MCF 10A (cell line): ENCODE measurements at regions of chr1 and their contacts with region 1.

Region 1: DNA sequence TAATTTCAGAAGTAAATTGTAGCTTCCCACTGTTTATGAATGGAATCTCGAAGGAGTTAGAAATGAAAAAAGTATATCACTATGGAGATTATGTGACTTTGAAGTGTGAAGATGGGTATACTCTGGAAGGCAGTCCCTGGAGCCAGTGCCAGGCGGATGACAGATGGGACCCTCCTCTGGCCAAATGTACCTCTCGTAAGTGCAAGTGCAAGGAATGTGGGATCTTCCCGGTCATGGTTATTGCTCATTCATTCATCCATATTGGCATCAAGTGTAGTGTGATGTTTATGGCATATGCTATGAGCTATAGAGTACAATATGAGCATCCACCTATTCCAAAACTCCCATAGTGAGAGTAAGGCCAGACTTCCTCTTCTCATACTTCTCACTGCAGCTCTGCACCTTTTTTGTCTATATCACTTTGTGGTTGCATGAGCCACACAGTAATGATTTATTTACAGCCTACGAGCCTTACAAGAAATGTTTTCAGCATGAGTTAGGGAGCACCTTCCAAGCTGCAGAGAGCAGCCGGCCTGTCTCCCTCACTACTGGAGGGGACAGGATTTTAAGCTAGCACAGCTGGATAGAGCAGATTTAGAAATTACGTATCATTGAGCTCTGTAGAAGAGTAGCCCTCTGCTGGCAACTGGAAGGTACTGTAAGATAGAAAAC is 24.9 kb upstream of the CR1L start:
- DNase-seq: peak; percentile 73
- H3K4me3 Mint-ChIP-seq: no peak overlapping the region
- H3K27ac Mint-ChIP-seq: no peak overlapping the region
- H3K4me1 Mint-ChIP-seq: no peaks in the 10 kb centered on the region
- H3K27me3 Mint-ChIP-seq: peaks cover 27% of the 10 kb centered on the region
- CTCF ChIP-seq: peak; percentile 75

Region 2: DNA sequence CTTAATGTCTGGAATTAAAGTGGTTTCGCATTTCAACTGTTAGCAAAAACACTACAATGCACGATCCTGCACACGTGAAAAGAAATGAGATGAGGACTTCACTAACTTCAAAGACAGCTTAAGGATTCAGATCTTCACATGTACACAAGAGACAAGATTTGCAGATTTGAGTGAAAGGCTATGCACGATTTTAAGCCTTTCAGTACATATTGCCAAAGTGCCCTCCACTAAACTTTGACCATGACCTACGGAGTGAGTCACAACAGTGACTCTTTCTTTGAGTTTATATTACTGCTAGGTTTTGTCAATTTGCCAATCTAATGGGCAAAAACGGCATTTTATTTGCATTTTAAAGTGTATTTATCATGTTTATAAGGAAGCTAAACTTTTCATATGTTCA is 16.2 kb before region 1 on chr1:
- CTCF ChIA-PET with region 1: interaction called, 59 read pairs
- POLR2A ChIA-PET with region 1: interaction called, 7 read pairs
- intact Hi-C with region 1: no loop called
- DNase-seq: peak; percentile 82
- H3K4me3 Mint-ChIP-seq: no peak overlapping the region
- H3K27ac Mint-ChIP-seq: no peak overlapping the region
- H3K4me1 Mint-ChIP-seq: peaks cover 5% of the 10 kb centered on the region
- H3K27me3 Mint-ChIP-seq: peaks cover 63% of the 10 kb centered on the region
- CTCF ChIP-seq: no peak

Region 3: GRCh38 chr1:207654320-207654719 is 34.3 kb after region 1 on chr1:
- CTCF ChIA-PET with region 1: interaction called, 11 read pairs
- POLR2A ChIA-PET with region 1: interaction called, 5 read pairs
- intact Hi-C with region 1: no loop called
- DNase-seq: no peak
- H3K4me3 Mint-ChIP-seq: no peak overlapping the region
- H3K27ac Mint-ChIP-seq: no peak overlapping the region
- H3K4me1 Mint-ChIP-seq: no peaks in the 10 kb centered on the region
- H3K27me3 Mint-ChIP-seq: peaks cover 15% of the 10 kb centered on the region
- CTCF ChIP-seq: peak; percentile 28

Region 4: GRCh38 chr1:207672522-207673130 is 52.6 kb after region 1 on chr1:
- CTCF ChIA-PET with region 1: interaction called, 16 read pairs
- POLR2A ChIA-PET with region 1: no interaction called
- intact Hi-C with region 1: loop called (anchors 2 kb)
- DNase-seq: peak; percentile 86
- H3K4me3 Mint-ChIP-seq: no peak overlapping the region
- H3K27ac Mint-ChIP-seq: no peak overlapping the region
- H3K4me1 Mint-ChIP-seq: peaks cover 12% of the 10 kb centered on the region
- H3K27me3 Mint-ChIP-seq: peaks cover 75% of the 10 kb centered on the region
- CTCF ChIP-seq: peak; percentile 90

Region 5: GRCh38 chr1:208007938-208008342 is 387.9 kb after region 1 on chr1:
- CTCF ChIA-PET with region 1: no interaction called
- POLR2A ChIA-PET with region 1: no interaction called
- intact Hi-C with region 1: no loop called
- DNase-seq: peak; percentile 82
- H3K4me3 Mint-ChIP-seq: no peak overlapping the region
- H3K27ac Mint-ChIP-seq: no peak overlapping the region
- H3K4me1 Mint-ChIP-seq: peaks cover 18% of the 10 kb centered on the region
- H3K27me3 Mint-ChIP-seq: no peaks in the 10 kb centered on the region
- CTCF ChIP-seq: no peak